Posterior cingulate gyrus (tissue), 11 donors: ENCODE measurements at regions of chr5 and their contacts with region 1.

Region 1: GRCh38 chr5:32613050-32613672 is 27.8 kb downstream of the SUB1 start:
- DNase-seq: peak; percentile 71 to 97 (median 89)

Region 2: GRCh38 chr5:32239385-32239784 is 373.8 kb before region 1 on chr5:
- intact Hi-C with region 1: no loop called
- DNase-seq: no peak

Region 3: DNA sequence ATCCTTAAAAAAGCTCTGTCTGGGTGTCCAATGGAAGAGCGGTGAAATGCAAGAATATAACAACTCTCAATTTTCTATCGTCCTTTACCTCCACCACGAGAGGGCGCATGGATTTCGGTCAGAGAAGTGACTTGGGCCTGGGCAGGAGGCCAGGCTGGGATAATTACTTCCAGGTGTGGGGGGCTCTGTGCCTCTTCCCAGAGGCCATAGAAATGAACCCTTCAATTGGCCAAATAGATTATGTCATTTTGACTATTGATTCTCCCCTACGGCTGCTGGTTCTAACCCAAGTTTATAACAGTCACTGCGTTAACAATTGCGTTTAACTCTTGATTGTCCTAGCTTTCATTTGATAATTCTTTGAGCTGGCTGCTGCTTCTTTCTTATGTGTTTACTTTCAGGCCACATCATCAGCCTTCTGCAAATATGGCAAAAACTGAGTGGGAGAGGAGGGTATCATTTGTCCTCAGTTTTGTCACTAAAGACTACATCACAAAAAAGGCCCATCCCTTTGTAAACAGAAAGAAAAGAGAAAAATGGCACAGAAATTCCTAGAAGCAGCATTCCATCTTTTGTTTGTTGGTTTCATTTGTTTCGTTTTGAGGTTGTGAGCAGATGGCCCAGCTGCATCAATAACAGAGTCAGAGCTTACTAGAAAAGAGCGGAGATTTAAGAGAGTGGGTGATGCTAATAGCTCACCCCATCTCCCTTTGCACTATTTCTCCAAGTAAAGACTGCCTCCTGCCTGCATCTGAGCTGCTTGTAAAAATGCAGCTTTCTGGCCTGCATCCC is 123.2 kb before region 1 on chr5:
- intact Hi-C with region 1: loop called (anchors 1 kb)
- DNase-seq: peak; percentile 23 to 93 (median 78)